ENCODE measurements at regions of chr13 and their contacts with region 1.

Region 1: GRCh38 chr13:35818633-35819067 is 312.5 kb downstream of the DCLK1 start:
- DNase-seq: peak; percentile 45
- H3K4me3 Mint-ChIP-seq: no peak overlapping the region
- H3K27ac Mint-ChIP-seq: no peak overlapping the region
- H3K4me1 Mint-ChIP-seq: no peaks in the 10 kb centered on the region
- H3K27me3 Mint-ChIP-seq: no peaks in the 10 kb centered on the region
- CTCF ChIP-seq: peak; percentile 53

Region 2: DNA sequence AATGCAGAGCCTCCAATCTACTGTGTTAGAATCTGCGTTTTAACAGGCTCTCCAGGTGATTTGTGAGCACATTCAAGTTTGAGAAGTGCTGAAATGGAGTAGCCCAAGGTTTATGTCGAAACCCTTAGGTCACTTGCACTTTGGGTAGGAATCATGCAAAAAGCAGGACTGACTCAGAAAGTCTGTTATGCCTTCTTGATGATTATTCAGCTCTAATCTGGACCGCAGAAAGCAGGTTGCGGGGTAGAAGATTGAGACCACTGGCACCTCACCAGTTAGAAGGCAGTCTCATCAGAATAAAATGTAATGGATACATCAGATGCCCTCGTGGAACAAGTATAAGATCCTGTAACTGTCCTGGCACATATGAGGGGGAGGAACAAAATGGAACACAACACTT is 13.7 kb before region 1 on chr13:
- CTCF ChIA-PET with region 1: interaction called, 41 read pairs
- POLR2A ChIA-PET with region 1: no interaction called
- intact Hi-C with region 1: no loop called
- DNase-seq: no peak
- H3K4me3 Mint-ChIP-seq: no peak overlapping the region
- H3K27ac Mint-ChIP-seq: no peak overlapping the region
- H3K4me1 Mint-ChIP-seq: no peaks in the 10 kb centered on the region
- H3K27me3 Mint-ChIP-seq: peaks cover 23% of the 10 kb centered on the region
- CTCF ChIP-seq: no peak

Region 3: DNA sequence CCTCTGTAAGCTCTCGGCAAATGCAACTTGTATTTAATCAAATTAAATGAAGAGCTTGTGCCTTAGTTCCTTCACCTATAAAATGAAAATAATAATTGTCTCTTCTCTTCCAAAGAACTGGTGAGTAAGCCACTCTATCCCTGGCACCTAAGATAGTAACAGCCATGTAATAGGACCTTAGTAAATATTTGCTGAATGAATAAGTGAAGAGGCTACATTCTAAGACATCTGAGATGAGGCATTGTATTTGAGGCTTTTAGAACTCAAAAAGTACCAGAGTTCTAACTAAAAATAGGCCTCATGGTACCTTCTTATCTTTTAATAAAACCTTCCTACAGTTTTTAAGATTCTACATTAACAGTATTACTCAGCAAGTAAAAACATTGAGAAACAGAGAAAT is 329.8 kb after region 1 on chr13:
- CTCF ChIA-PET with region 1: no interaction called
- POLR2A ChIA-PET with region 1: no interaction called
- intact Hi-C with region 1: no loop called
- DNase-seq: no peak
- H3K4me3 Mint-ChIP-seq: no peak overlapping the region
- H3K27ac Mint-ChIP-seq: no peak overlapping the region
- H3K4me1 Mint-ChIP-seq: peaks cover 5% of the 10 kb centered on the region
- H3K27me3 Mint-ChIP-seq: no peaks in the 10 kb centered on the region
- CTCF ChIP-seq: no peak